H1 (cell line): ENCODE measurements at regions of chr1 and their contacts with region 1.

Region 1: GRCh38 chr1:118473825-118474224 is 288.8 kb upstream of the SPAG17 start:
- DNase-seq: no peak
- H3K4me3 ChIP-seq: no peak overlapping the region
- H3K27ac ChIP-seq: no peak overlapping the region
- H3K4me1 ChIP-seq: no peaks in the 10 kb centered on the region
- H3K27me3 ChIP-seq: no peaks in the 10 kb centered on the region
- CTCF ChIP-seq: no peak
- EP300 ChIP-seq: no peak
- POLR2A ChIP-seq: no peak
- RAD21 ChIP-seq: no peak

Region 2: DNA sequence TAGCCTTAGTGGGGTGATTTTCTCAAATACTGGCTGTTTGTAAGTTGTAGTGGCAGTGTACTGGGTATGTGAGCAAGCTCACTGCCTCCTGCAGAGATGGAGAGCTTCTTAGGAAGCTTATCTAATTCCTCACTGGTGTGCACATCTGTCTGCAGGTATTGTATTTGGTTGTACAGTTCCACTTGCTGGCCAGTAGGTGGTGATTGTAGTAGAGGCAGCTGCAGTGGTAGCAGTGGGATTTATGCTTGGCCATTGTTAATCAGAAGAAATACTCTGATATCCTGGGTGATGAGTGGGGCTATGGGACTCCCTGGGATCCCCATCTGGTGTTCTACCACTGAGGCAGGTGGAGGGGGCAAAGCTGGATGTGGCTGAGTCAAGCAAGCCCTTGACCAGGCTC is 12.7 kb before region 1 on chr1:
- CTCF ChIA-PET with region 1: interaction called, 18 read pairs
- POLR2A ChIA-PET with region 1: no interaction called
- DNase-seq: no peak
- H3K4me3 ChIP-seq: no peak overlapping the region
- H3K27ac ChIP-seq: no peak overlapping the region
- H3K4me1 ChIP-seq: no peaks in the 10 kb centered on the region
- H3K27me3 ChIP-seq: no peaks in the 10 kb centered on the region
- CTCF ChIP-seq: peak in 2 of 3 experiments; percentile 29 to 49; a peak in 2 of 4 replicates
- EP300 ChIP-seq: no peak
- POLR2A ChIP-seq: no peak
- RAD21 ChIP-seq: peak; percentile 42 to 59; a peak in 3 of 4 replicates